Endothelial cell of umbilical vein (primary cell): ENCODE measurements at regions of chr7 and their contacts with region 1.

Region 1: GRCh38 chr7:84291756-84292155 is 97.2 kb upstream of the SEMA3A start:
- DNase-seq: no peak
- H3K4me3 ChIP-seq: no peak overlapping the region
- H3K27ac ChIP-seq: no peak overlapping the region
- H3K4me1 ChIP-seq: no peaks in the 10 kb centered on the region
- H3K27me3 ChIP-seq: no peaks in the 10 kb centered on the region
- CTCF ChIP-seq: no peak
- POLR2A ChIP-seq: no peak

Region 2: GRCh38 chr7:84302949-84303348 is 11.2 kb after region 1 on chr7:
- CTCF ChIA-PET with region 1: no interaction called
- POLR2A ChIA-PET with region 1: no interaction called
- dilution Hi-C with region 1: no loop called
- intact Hi-C with region 1: loop called (anchors 2 kb)
- DNase-seq: no peak
- H3K4me3 ChIP-seq: no peak overlapping the region
- H3K27ac ChIP-seq: no peak overlapping the region
- H3K4me1 ChIP-seq: no peaks in the 10 kb centered on the region
- H3K27me3 ChIP-seq: no peaks in the 10 kb centered on the region
- CTCF ChIP-seq: no peak
- POLR2A ChIP-seq: no peak